WTC11 (cell line): ENCODE measurements at regions of chr1 and their contacts with region 1.

Region 1: GRCh38 chr1:156838981-156839410 is 19.9 kb downstream of the INSRR start:
- DNase-seq: peak; percentile 67
- ATAC-seq: peak; percentile 83
- H3K4me3 Mint-ChIP-seq: no peak overlapping the region
- H3K27ac Mint-ChIP-seq: no peak overlapping the region
- H3K4me1 Mint-ChIP-seq: peaks cover 5% of the 10 kb centered on the region
- H3K27me3 Mint-ChIP-seq: peaks cover 61% of the 10 kb centered on the region
- CTCF ChIP-seq: peak; percentile 87

Region 2: GRCh38 chr1:156591432-156592157 is 247.4 kb before region 1 on chr1 and contains the start of gene NAXE:
- CTCF ChIA-PET with region 1: no interaction called
- POLR2A ChIA-PET with region 1: no interaction called
- DNase-seq: peak; percentile 81
- ATAC-seq: peak; percentile 91
- H3K4me3 Mint-ChIP-seq: peak within 1 kb of the TSS; percentile 79
- H3K27ac Mint-ChIP-seq: peak within 1 kb of the TSS; percentile 94
- H3K4me1 Mint-ChIP-seq: peaks cover 16% of the 10 kb centered on the region
- H3K27me3 Mint-ChIP-seq: no peaks in the 10 kb centered on the region; the same call in 1 of the 2 replicates
- CTCF ChIP-seq: no peak
- total RNA-seq, gene NAXE: 81.6 to 98.1 TPM (median 92.8 TPM) in 3 replicates

Region 3: GRCh38 chr1:156813750-156814570 is 25.0 kb before region 1 on chr1:
- CTCF ChIA-PET with region 1: interaction called, 11 read pairs
- POLR2A ChIA-PET with region 1: no interaction called
- DNase-seq: peak; percentile 87
- ATAC-seq: peak; percentile 88
- H3K4me3 Mint-ChIP-seq: peak overlapping the region; percentile 62
- H3K27ac Mint-ChIP-seq: no peak overlapping the region
- H3K4me1 Mint-ChIP-seq: peaks cover 22% of the 10 kb centered on the region
- H3K27me3 Mint-ChIP-seq: peaks cover 59% of the 10 kb centered on the region
- CTCF ChIP-seq: no peak

Region 4: DNA sequence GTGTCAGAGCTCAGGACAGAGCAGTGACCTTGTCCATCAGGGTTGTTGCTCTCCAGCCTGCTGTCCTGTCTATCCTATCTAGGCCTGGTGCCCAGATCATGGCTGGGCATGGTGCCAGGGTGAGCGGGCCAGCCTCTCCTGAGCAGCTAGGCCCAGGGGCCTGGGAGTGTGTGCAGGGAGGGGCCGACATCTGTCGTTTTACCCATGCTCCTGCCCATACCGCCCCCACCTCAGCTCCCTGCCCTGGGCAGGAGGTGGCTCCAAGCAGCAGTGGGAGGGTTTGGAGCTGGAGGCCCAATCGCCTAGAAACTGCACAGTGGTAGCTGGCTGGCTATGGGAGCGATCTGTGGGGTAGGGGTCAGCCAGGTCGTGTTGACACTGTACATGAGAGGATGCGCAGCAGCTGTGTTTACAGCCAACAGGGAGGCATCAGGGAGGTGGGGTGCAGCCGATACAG is 13.4 kb after region 1 on chr1:
- CTCF ChIA-PET with region 1: interaction called, 177 read pairs
- POLR2A ChIA-PET with region 1: no interaction called
- DNase-seq: no peak
- ATAC-seq: no peak
- H3K4me3 Mint-ChIP-seq: no peak overlapping the region
- H3K27ac Mint-ChIP-seq: no peak overlapping the region
- H3K4me1 Mint-ChIP-seq: peaks cover 10% of the 10 kb centered on the region
- H3K27me3 Mint-ChIP-seq: peaks cover 89% of the 10 kb centered on the region
- CTCF ChIP-seq: no peak

Region 5: GRCh38 chr1:156892190-156893047 is 53.4 kb after region 1 on chr1:
- CTCF ChIA-PET with region 1: interaction called, 110 read pairs
- POLR2A ChIA-PET with region 1: interaction called, 3 read pairs
- DNase-seq: peak; percentile 96
- ATAC-seq: peak; percentile 78
- H3K4me3 Mint-ChIP-seq: peak overlapping the region; percentile 72
- H3K27ac Mint-ChIP-seq: no peak overlapping the region
- H3K4me1 Mint-ChIP-seq: peaks cover 24% of the 10 kb centered on the region
- H3K27me3 Mint-ChIP-seq: peaks cover 76% of the 10 kb centered on the region
- CTCF ChIP-seq: peak; percentile 72